Endothelial cell of umbilical vein (primary cell): ENCODE measurements at regions of chr13 and their contacts with region 1.

Region 1: DNA sequence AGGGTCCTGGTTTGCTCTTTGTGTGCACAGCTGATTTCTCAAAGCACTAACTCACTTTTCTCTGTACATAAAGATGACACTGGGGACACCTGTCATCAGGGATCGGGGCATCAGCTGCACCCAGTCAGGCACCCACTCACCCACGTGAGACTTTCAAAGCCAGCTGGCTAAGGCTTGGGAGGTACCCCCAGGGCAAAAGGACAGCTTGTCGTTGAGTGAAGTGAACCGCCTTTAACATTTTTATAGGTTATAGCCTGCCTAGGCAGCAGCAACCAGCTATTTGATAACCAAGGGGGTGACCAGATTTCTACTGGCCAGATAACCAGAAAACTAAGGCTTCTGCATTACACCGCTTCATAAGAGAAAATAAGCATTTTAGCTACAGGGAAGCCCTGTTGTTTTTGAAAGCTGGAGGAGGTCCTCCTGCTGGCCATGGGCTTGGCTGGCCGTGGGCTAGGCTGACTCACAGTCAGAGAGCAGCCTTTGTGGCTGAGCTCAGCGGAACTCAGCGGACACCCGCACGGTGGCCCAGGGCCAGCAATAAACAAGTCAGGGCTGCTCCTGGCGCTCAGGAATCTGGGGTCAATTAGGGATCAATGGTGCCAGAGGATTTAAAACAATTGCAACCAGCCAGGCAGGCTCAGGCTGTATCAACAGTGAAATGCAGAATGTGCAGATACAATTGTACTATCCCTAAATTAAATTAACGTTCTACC is 57.1 kb downstream of the ALOX5AP start:
- DNase-seq: peak; percentile 96
- H3K4me3 ChIP-seq: no peak overlapping the region
- H3K27ac ChIP-seq: peak overlapping the region; percentile 73
- H3K4me1 ChIP-seq: peaks cover 31% of the 10 kb centered on the region
- H3K27me3 ChIP-seq: no peaks in the 10 kb centered on the region
- CTCF ChIP-seq: peak; percentile 47 to 63
- POLR2A ChIP-seq: no peak

Region 2: DNA sequence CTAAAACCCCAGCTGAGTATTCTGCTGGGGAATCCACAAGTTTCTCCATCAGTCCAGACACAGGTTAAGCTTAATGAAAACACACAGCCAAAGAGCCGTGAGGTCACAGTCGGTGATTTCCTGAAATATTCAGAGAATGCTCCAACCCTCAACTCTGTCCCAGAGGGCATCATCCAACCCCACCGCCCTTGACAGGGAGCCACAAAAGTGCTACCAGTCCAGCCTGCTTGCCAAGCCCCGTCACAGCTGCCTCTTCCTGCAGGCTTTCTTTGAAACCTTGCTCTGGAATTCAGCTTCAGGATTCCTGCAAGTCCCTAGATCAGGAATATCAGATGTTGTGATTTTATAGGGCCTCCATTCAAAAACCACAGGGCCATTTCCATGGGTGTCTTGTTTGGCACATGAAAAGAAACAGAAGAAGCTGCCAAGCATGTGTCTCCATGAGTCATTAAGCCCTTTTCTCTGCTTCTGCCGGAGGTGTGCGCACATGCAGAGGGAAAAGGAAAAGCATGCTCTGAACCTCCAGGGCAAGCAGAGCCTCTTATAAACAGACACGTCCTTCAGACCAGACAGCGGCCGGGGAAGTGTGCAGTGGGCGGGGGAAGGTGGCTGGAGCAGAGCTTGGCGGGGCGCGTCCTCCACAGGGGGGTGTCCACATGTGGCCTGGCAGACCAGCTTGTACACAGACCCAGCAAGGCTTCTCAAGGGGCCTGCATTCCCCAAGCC is 649.8 kb before region 1 on chr13:
- CTCF ChIA-PET with region 1: no interaction called
- POLR2A ChIA-PET with region 1: no interaction called
- dilution Hi-C with region 1: no loop called
- intact Hi-C with region 1: no loop called
- DNase-seq: peak; percentile 80
- H3K4me3 ChIP-seq: no peak overlapping the region
- H3K27ac ChIP-seq: peak overlapping the region; percentile 49
- H3K4me1 ChIP-seq: peaks cover 27% of the 10 kb centered on the region
- H3K27me3 ChIP-seq: no peaks in the 10 kb centered on the region
- CTCF ChIP-seq: no peak
- POLR2A ChIP-seq: no peak

Region 3: DNA sequence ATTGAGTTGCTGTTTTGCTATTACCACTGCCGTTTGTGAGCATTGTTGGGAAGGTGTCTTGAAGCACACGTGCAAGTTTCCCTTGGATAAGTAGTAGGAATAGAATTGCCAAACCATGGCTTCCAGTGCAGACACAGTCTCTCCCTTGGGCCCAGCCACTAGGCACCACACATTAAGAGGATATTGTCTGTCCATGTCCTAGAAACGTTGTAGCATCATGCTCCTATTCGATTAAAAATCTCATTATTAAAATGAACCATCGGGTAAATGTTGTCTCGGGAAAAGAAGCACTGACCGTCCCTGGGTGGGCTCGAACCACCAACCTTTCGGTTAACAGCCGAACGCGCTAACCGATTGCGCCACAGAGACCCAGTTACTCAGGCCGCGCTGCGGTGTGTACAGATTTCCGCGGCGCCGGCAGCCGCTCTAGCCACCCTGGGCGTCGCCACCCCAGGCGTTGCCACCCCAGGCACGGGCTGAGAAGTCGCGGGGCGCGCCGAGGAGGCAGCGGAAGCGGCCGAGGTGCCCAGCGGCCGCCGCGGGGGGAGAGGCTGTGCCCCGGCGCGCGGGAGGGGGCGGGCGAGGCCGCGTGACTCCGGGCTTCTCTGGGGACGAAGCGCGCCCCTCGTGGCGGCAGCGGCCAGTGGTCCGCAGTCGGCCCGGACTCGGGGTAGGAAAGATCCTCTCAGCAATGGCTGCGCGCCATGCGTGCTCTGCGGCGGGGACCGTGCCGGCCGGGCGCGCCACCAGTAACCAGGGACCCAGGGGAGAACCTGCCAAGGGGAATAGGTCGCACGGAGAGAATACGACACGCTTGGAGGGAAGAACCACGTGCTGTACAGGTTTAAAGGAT is 118.5 kb before region 1 on chr13:
- CTCF ChIA-PET with region 1: interaction called, 14 read pairs
- POLR2A ChIA-PET with region 1: no interaction called
- dilution Hi-C with region 1: loop called (anchors 25 kb)
- intact Hi-C with region 1: loop called (anchors 2 kb)
- DNase-seq: peak; percentile 88
- H3K4me3 ChIP-seq: peak overlapping the region; percentile 39 to 48 (median 43)
- H3K27ac ChIP-seq: peak overlapping the region; percentile 66
- H3K4me1 ChIP-seq: peaks cover 8% of the 10 kb centered on the region
- H3K27me3 ChIP-seq: no peaks in the 10 kb centered on the region
- CTCF ChIP-seq: peak; percentile 82 to 83
- POLR2A ChIP-seq: no peak

Region 4: DNA sequence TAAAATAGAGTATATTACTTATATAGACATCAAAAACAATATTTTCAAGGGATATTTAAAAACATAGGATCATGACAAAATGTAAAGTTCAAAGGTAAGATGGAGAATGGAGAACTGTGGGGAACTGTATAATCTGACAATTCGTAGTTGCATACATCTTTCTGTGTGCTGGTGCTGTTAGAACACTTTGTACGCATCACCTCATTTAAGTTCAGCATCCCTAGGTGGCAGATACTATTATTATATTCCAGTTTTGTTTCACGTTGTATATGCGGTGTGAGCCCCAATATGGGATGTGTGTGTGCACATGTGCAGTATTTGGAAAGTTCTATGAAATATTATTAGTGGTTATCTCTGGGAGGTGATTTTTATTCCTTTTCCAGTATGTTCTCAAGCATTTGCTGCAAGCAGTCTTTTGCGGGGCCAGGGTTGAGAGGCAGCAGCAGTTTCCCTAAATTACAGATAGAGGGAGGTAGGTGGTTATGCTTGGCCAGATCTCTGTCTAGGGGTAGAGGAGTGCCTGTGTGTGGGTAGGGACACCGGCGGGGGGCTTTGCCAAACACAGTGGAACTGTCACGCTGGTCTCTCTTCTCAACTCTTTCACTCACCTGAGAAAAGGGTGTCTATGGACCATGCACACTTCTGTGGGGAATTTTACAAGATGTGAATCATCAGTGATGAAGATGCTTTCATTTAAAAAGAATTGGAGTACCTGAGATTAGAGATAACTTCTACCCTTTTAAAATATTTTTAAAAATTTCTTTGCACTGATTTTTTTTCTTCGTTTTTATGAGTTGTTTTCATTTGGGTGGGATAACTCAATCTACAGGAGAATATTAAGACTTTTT is 112.7 kb before region 1 on chr13:
- CTCF ChIA-PET with region 1: interaction called, 16 read pairs
- POLR2A ChIA-PET with region 1: no interaction called
- dilution Hi-C with region 1: loop called (anchors 25 kb)
- intact Hi-C with region 1: loop called (anchors 2 kb)
- DNase-seq: peak; percentile 58
- H3K4me3 ChIP-seq: no peak overlapping the region
- H3K27ac ChIP-seq: no peak overlapping the region
- H3K4me1 ChIP-seq: peaks cover 6% of the 10 kb centered on the region
- H3K27me3 ChIP-seq: no peaks in the 10 kb centered on the region
- CTCF ChIP-seq: peak; percentile 20 to 64
- POLR2A ChIP-seq: no peak

Region 5: DNA sequence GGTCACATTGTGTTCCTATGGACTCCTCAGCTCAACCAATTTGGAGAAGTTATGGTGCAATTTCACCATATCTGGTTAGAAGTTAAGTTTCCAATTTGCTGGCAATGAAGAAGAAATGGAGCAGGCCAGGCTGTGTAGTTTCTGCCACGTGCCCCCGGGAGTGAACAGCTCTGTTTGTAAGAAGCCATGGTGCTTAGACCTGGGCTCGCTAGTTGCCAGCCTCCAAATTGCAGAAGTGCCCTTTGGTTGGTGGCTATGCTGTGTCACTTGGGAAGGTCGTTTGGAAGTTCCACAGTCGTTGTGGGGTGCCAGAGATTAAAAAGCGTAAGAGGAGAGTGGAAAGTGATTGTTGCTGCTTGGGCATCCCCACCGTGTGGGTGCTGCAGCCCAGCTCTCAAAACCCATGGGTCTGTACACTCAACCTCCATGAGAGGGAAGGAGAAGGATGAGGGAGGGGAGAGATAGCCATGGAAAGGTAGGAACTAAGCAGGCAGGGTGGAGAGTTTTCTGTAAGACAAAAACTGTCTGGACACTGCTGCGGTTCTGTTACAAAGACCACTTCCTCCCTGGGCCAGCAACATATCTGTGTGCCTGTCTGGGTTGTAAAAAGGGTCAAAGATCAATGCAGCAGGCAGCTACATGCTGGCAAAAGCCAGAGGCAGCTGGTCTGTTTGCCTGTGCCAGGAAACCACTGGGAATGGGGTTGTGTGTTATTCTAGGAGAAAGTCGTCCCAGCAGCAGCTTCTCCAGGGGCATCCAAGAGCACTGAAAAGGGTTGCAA is 46.3 kb before region 1 on chr13:
- CTCF ChIA-PET with region 1: interaction called, 13 read pairs
- POLR2A ChIA-PET with region 1: no interaction called
- dilution Hi-C with region 1: no loop called
- intact Hi-C with region 1: loop called (anchors 2 kb)
- DNase-seq: peak; percentile 81
- H3K4me3 ChIP-seq: no peak overlapping the region
- H3K27ac ChIP-seq: no peak overlapping the region
- H3K4me1 ChIP-seq: peaks cover 34% of the 10 kb centered on the region
- H3K27me3 ChIP-seq: no peaks in the 10 kb centered on the region
- CTCF ChIP-seq: no peak
- POLR2A ChIP-seq: peak; percentile 23